ENCODE measurements at regions of chr6 and their contacts with region 1.

Region 1: DNA sequence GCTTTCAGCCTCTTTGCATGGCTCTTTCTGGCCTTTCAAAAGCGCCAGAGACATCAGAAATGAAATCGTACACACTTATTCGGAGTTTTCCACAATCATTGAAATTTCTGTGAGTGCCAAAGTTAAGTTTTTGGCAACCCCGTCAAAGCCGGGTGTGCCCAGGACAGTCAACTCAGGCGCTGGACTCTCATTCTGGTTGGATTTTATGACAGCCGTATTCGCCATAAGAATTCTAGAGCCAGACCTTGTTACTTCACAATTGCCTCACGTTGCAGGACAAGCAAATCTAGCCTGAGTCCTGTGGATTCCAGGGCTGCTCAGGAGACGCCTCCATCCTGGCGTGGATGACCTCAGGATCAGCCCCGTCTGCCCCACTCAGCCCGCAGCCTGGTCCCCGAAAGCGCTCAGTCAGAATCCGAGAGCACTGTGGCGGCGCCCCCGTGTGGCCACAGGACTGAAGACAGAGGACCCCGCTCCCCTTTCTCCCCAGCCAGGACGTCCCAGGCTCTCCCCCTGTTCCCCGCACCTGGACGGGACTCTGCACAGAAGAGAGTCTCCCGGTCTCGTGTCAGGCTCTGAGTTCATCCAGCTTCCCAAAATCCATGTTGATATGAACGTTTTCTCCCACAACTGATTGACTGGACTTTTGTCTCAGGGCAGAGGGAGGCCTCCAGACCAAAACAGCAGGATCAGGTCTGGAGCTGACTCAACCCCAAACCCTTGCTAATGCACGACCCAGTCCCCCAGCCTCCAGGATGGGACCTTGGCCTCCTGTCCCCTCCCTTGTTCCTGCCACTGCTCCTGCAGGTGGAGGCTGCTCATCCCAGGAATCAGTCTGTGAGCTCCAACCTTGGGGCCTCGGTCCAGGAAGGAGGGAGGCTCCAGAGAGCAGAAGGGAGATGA is 38.2 kb downstream of the MICA start:
- DNase-seq: peak in 11 of 14 experiments; percentile 7 to 94 (median 84)
- ATAC-seq: peak; percentile 95
- H3K4me3 ChIP-seq: no peak overlapping the region
- H3K4me3 Mint-ChIP-seq: no peak overlapping the region
- H3K27ac ChIP-seq: no peak overlapping the region
- H3K27ac Mint-ChIP-seq: no peak overlapping the region
- H3K4me1 ChIP-seq: peaks cover 8% of the 10 kb centered on the region
- H3K4me1 Mint-ChIP-seq: no peaks in the 10 kb centered on the region
- H3K27me3 ChIP-seq: peaks cover 0 to 7% of the 10 kb centered on the region in 2 experiments
- H3K27me3 Mint-ChIP-seq: peaks cover 65% of the 10 kb centered on the region
- CTCF ChIP-seq: peak; percentile 83

Region 2: GRCh38 chr6:31239854-31240253 is 201.8 kb before region 1 on chr6:
- CTCF ChIA-PET with region 1: no interaction called
- POLR2A ChIA-PET with region 1: no interaction called
- intact Hi-C with region 1: no loop called
- DNase-seq: no peak
- ATAC-seq: no peak
- H3K4me3 ChIP-seq: no peak overlapping the region
- H3K4me3 Mint-ChIP-seq: no peak overlapping the region
- H3K27ac ChIP-seq: no peak overlapping the region
- H3K27ac Mint-ChIP-seq: no peak overlapping the region
- H3K4me1 ChIP-seq: no peaks in the 10 kb centered on the region
- H3K4me1 Mint-ChIP-seq: peaks cover 9% of the 10 kb centered on the region
- H3K27me3 ChIP-seq: no peaks in the 10 kb centered on the region
- H3K27me3 Mint-ChIP-seq: peaks cover 11% of the 10 kb centered on the region
- CTCF ChIP-seq: no peak

Region 3: GRCh38 chr6:31396422-31397152 is 45.0 kb before region 1 on chr6:
- CTCF ChIA-PET with region 1: interaction called, 27 read pairs
- POLR2A ChIA-PET with region 1: interaction called, 17 read pairs
- intact Hi-C with region 1: loop called (anchors 1 kb)
- DNase-seq: peak; percentile 76 to 92 (median 87)
- ATAC-seq: peak; percentile 75
- H3K4me3 ChIP-seq: no peak overlapping the region
- H3K4me3 Mint-ChIP-seq: peak overlapping the region; percentile 84
- H3K27ac ChIP-seq: no peak overlapping the region
- H3K27ac Mint-ChIP-seq: peak overlapping the region; percentile 28
- H3K4me1 ChIP-seq: peaks cover 33% of the 10 kb centered on the region
- H3K4me1 Mint-ChIP-seq: peaks cover 32% of the 10 kb centered on the region
- H3K27me3 ChIP-seq: no peaks in the 10 kb centered on the region
- H3K27me3 Mint-ChIP-seq: no peaks in the 10 kb centered on the region
- CTCF ChIP-seq: peak; percentile 76

Region 4: GRCh38 chr6:31403283-31403989 is 38.2 kb before region 1 on chr6 and contains the start of gene MICA:
- CTCF ChIA-PET with region 1: interaction called, 27 read pairs
- POLR2A ChIA-PET with region 1: interaction called, 17 read pairs
- intact Hi-C with region 1: loop called in 1 of 2 experiments (anchors 1 kb)
- DNase-seq: peak; percentile 25 to 82 (median 54)
- ATAC-seq: peak; percentile 38
- H3K4me3 ChIP-seq: peak within 1 kb of the TSS; percentile 76
- H3K4me3 Mint-ChIP-seq: peak within 1 kb of the TSS; percentile 92
- H3K27ac ChIP-seq: peak within 1 kb of the TSS; percentile 33 to 50
- H3K27ac Mint-ChIP-seq: peak within 1 kb of the TSS; percentile 81
- H3K4me1 ChIP-seq: peaks cover 51% of the 10 kb centered on the region
- H3K4me1 Mint-ChIP-seq: peaks cover 75% of the 10 kb centered on the region
- H3K27me3 ChIP-seq: no peaks in the 10 kb centered on the region
- H3K27me3 Mint-ChIP-seq: no peaks in the 10 kb centered on the region
- CTCF ChIP-seq: no peak
- total RNA-seq, gene MICA: 10.6 to 14.0 TPM

Region 5: DNA sequence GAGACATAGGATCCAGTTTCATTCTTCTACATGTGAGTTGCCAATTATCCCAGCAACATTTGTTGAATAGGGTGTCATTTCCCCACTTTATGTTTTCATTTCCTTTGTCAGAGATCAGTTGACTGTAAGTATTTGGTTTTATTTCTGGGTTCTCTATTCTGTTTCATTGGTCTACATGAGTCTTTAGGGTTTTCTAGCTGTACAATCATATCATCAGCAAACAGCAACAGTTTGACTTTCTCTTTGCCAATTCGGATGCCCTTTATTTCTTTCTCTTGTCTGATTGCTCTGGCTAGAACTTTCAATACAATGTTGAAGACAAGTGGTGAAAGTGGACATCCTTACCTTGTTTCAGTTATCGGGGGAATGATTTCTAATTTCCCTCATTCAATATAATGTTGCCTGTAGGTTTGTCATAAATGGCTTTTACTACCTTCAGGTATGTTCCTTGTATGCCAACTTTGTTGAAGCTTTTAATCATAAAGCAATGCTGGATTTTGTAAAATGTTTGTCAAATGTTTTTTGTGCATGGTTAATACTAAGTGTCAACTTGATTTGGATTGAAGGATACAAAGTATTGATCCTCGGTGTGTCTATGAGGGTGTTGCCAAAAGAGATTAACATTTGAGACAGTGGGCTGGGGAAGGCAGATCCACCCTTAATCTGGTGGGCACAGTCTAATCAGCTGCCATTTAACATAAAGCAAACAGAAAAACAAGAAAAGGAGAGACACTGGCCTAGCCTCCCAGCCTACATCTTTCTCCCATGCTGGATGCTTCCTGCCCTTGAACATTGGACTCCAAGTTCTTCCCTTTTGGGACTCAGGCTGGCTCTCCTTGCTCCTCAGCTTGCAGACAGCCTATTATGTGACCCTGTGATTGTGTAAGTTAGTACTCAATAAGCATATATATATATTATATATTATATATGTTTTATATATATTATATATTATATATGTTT is 14.9 kb before region 1 on chr6:
- CTCF ChIA-PET with region 1: interaction called, 14 read pairs
- POLR2A ChIA-PET with region 1: no interaction called
- intact Hi-C with region 1: no loop called
- DNase-seq: no peak
- ATAC-seq: peak; percentile 44
- H3K4me3 ChIP-seq: no peak overlapping the region
- H3K4me3 Mint-ChIP-seq: no peak overlapping the region
- H3K27ac ChIP-seq: no peak overlapping the region
- H3K27ac Mint-ChIP-seq: no peak overlapping the region
- H3K4me1 ChIP-seq: no peaks in the 10 kb centered on the region
- H3K4me1 Mint-ChIP-seq: peaks cover 9% of the 10 kb centered on the region
- H3K27me3 ChIP-seq: no peaks in the 10 kb centered on the region
- H3K27me3 Mint-ChIP-seq: no peaks in the 10 kb centered on the region
- CTCF ChIP-seq: no peak

Region 6: DNA sequence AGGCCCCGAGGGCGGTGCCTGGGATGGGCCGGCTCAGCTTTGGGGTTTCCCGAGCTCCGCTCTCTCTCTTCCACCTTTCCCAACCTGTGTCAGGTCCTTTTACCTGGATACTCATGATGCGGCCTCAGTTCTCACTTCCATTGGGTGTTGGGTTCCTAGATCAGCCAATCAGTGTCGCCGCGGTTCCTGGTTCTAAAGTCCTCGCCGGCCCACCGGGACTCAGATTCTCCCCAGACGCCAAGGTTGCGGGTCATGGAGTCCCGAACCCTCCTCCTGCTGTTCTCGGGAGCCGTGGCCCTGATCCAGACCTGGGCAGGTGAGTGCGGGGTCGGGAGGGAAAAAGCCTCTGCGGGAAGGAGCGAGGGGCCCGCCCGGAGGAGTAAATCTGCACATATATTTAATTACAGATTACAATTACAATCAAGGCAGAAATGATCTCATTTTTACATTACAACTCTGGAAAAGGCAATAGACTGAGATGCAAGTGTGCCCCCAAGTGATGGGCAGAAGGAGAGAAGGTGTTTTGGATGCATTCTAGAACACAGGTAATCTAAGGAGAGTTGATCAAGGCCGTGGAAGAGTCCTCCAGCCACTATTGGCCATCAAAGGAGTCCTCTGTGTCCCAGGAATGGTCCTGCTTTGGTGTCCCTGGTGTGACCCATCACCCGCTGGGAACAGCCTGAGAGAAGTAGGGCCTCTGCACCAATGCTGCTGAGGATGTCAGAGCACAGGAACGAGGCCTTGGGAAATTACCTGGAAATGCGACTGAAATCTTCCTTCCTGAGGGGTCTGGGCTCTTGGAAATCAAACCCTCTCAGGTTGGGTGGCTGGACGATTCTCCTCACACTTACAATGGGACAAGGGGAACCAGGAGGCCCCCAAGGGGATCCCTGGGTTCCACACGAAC is 21.6 kb after region 1 on chr6:
- CTCF ChIA-PET with region 1: interaction called, 7 read pairs
- POLR2A ChIA-PET with region 1: no interaction called
- intact Hi-C with region 1: loop called in 1 of 2 experiments (anchors 1 kb)
- DNase-seq: peak; percentile 81 to 97 (median 87)
- ATAC-seq: peak; percentile 97
- H3K4me3 ChIP-seq: peak overlapping the region; percentile 89
- H3K4me3 Mint-ChIP-seq: peak overlapping the region; percentile 99
- H3K27ac ChIP-seq: peak overlapping the region; percentile 91 to 99
- H3K27ac Mint-ChIP-seq: peak overlapping the region; percentile 96
- H3K4me1 ChIP-seq: peaks cover 58% of the 10 kb centered on the region
- H3K4me1 Mint-ChIP-seq: peaks cover 69% of the 10 kb centered on the region
- H3K27me3 ChIP-seq: no peaks in the 10 kb centered on the region
- H3K27me3 Mint-ChIP-seq: peaks cover 6% of the 10 kb centered on the region
- CTCF ChIP-seq: no peak

Region 7: GRCh38 chr6:31559958-31560696 is 118.5 kb after region 1 on chr6:
- CTCF ChIA-PET with region 1: no interaction called
- POLR2A ChIA-PET with region 1: no interaction called
- intact Hi-C with region 1: no loop called
- DNase-seq: peak in 7 of 14 experiments; percentile 29 to 81 (median 65)
- ATAC-seq: peak; percentile 58
- H3K4me3 ChIP-seq: peak overlapping the region; percentile 44
- H3K4me3 Mint-ChIP-seq: peak overlapping the region; percentile 82
- H3K27ac ChIP-seq: peak overlapping the region; percentile 63 to 74
- H3K27ac Mint-ChIP-seq: peak overlapping the region; percentile 90
- H3K4me1 ChIP-seq: peaks cover 72% of the 10 kb centered on the region
- H3K4me1 Mint-ChIP-seq: peaks cover 62% of the 10 kb centered on the region
- H3K27me3 ChIP-seq: no peaks in the 10 kb centered on the region
- H3K27me3 Mint-ChIP-seq: no peaks in the 10 kb centered on the region
- CTCF ChIP-seq: no peak

Measured in CD4-positive, alpha-beta T cell (primary cell).